ENCODE measurements at regions of chr11 and their contacts with region 1.

Region 1: GRCh38 chr11:66438504-66439466 is at the start of gene MRPL11:
- H3K4me3 ChIP-seq: peak within 1 kb of the TSS; percentile 68
- H3K27ac ChIP-seq: peak within 1 kb of the TSS; percentile 68
- H3K4me1 ChIP-seq: no peaks in the 10 kb centered on the region
- CTCF ChIP-seq: peak; percentile 71

Region 2: DNA sequence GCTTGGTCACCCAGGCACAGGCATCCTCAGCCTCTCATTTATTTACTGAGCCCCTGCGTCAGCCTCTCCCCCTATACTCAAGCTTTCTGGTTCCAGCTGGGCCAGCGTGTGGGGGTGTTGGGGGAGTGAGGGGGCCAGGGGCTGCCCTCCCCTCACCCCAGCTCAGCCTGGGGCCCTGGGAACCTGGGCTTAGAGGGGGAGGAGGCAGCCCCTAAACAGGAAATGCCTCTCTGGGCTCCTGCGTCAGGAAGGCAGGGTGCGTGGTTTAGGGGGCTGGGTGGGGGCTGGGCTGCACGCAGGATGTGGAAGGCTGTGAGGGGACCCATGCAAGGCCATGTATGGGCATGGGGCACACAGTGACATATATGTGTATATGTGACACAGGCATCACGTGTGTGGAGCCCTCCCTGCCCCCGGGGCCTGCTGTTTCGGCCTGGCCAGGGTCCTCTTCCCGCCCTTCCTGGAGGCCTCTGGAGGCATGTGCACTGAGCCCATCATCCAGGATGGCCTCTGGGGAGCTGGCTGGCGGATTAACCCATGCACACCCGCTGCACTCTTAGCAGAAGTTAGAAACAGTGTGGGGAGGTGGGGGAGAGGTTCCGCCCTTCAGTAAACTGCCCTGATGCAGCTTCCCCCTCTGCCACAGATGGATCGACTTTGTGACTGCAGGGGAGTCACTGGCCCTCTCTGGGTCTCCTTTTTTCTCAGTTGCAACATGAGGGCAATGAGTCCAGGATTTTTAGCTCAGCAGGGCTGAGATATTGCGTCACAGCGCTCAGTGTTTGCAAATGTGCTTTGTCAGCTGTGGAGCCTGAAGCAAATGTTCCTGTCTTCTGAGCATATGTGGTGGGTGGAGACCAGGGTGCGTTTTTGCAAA is 120.8 kb before region 1 on chr11:
- CTCF ChIA-PET with region 1: no interaction called
- POLR2A ChIA-PET with region 1: no interaction called
- H3K4me3 ChIP-seq: no peak overlapping the region
- H3K27ac ChIP-seq: no peak overlapping the region
- H3K4me1 ChIP-seq: no peaks in the 10 kb centered on the region
- CTCF ChIP-seq: no peak

Region 3: DNA sequence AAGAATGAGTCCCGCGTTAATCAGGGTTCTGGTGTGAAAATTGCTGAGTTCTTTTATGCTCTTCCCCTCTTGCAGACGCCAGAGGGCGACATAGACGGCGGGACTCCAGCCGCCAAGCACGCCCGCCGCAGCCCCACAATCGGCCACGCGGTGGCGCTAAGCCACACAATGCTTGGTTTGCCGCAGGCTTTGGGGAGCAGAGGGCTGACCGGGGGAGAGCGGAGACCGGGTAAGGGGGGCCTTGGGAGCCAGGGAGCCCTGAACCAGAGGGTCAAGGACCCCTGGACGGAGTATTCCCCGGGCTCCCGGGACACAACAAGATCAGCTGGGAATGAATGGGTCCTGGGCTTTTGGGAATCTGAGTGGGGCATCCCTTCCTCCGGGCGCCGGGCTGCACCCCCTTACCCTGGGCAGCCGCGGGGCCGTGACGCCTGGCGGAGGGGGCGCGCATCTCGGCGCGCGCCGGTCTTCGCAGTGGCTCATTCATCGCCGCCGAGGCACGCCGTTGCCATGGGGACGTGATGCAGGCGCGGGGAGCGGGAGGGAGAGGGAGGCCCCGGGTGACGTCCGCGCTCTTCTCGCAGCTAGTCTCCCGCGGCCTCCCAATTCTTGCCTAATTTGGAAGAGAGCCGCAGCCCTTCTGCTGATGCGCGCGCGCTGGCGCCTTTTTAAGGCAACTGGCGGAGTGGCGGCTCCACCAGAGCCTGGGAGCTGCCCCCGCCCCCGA is 30.1 kb before region 1 on chr11:
- CTCF ChIA-PET with region 1: interaction called, 27 read pairs
- POLR2A ChIA-PET with region 1: interaction called, 5 read pairs
- H3K4me3 ChIP-seq: peak overlapping the region; percentile 22
- H3K27ac ChIP-seq: no peak overlapping the region
- H3K4me1 ChIP-seq: no peaks in the 10 kb centered on the region
- CTCF ChIP-seq: peak; percentile 96

Region 4: DNA sequence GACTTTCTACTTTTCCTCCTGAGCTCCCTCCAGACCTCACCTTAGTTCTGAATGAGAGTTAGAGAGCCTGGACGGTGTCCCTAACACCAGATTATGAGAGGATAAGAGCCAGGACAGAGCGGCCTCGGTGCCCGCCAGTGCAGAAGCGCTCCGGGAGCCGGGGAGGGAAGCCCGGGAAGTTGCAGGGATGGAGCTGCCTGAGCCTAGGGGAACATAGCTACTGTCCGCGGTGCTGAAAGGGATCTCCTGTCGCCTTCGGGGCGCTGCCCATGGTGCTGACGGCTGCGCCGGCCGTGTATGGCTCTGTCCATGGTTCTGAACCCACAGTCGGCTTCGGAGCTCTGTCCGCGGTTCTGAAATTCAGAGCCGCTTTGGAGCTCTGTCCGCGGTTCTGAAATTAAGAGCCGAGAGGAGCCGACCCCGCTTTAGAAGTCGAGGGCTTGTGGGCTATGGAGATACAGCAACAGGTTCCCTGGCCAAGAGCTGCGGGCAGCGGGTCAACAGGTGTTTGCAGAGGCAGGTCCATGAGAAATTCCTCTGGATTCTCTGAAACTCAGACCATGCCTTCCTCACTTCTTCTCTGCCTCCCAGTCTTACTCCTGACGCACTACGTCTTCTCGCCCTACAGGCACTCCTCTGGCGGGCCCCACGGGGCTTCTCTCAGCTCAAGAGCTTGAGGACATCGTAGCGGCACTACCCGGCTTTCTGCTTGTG is 17.1 kb before region 1 on chr11:
- CTCF ChIA-PET with region 1: interaction called, 15 read pairs
- POLR2A ChIA-PET with region 1: interaction called, 10 read pairs
- H3K4me3 ChIP-seq: no peak overlapping the region
- H3K27ac ChIP-seq: no peak overlapping the region
- H3K4me1 ChIP-seq: no peaks in the 10 kb centered on the region
- CTCF ChIP-seq: no peak

Region 5: GRCh38 chr11:66480117-66480938 is 41.5 kb after region 1 on chr11 and contains the start of gene DPP3:
- CTCF ChIA-PET with region 1: interaction called, 3 read pairs
- POLR2A ChIA-PET with region 1: interaction called, 17 read pairs
- H3K4me3 ChIP-seq: peak within 1 kb of the TSS; percentile 73
- H3K27ac ChIP-seq: peak within 1 kb of the TSS; percentile 77
- H3K4me1 ChIP-seq: no peaks in the 10 kb centered on the region
- CTCF ChIP-seq: no peak

Measured in HEK293 (cell line).